GM18951 (cell line): ENCODE measurements at regions of chr17 and their contacts with region 1.

Region 1: GRCh38 chr17:75749545-75750389 is 15.2 kb downstream of the GALK1 start:
- POLR2A ChIP-seq: no peak

Region 2: GRCh38 chr17:75619506-75620431 is 130.0 kb before region 1 on chr17:
- in situ Hi-C with region 1: loop called (anchors 10 kb)
- POLR2A ChIP-seq: no peak

Region 3: GRCh38 chr17:75679706-75680442 is 69.9 kb before region 1 on chr17:
- in situ Hi-C with region 1: loop called (anchors 10 kb)
- POLR2A ChIP-seq: no peak

Region 4: GRCh38 chr17:76005263-76006149 is 255.7 kb after region 1 on chr17:
- in situ Hi-C with region 1: no loop called
- POLR2A ChIP-seq: no peak

Region 5: GRCh38 chr17:76124582-76125390 is 375.0 kb after region 1 on chr17:
- in situ Hi-C with region 1: no loop called
- POLR2A ChIP-seq: no peak